ENCODE measurements at regions of chr17 and their contacts with region 1.

Region 1: GRCh38 chr17:37406635-37407461 is at the starts of genes ACACA and TADA2A:
- DNase-seq: peak; percentile 88 to 97 (median 96)
- ATAC-seq: peak; percentile 97
- H3K4me3 ChIP-seq: peak within 1 kb of the TSS; percentile 84
- H3K27ac ChIP-seq: peak within 1 kb of the TSS; percentile 98
- H3K4me1 ChIP-seq: peaks cover 15% of the 10 kb centered on the region in 2 experiments; a peak in 3 of 5 replicates
- H3K27me3 ChIP-seq: no peaks in the 10 kb centered on the region
- CTCF ChIP-seq: no peak
- EP300 ChIP-seq: 0 out of 2 replicates have a peak, but pooled peaks have one; percentile 11
- POLR2A ChIP-seq: peak; percentile 87
- RAD21 ChIP-seq: no peak
- polyA plus RNA-seq, gene ACACA: 35.9 to 42.9 TPM
- polyA plus RNA-seq, gene TADA2A: 28.0 to 33.5 TPM

Region 2: GRCh38 chr17:37465069-37465616 is 58.3 kb after region 1 on chr17:
- CTCF ChIA-PET with region 1: no interaction called
- POLR2A ChIA-PET with region 1: no interaction called
- in situ Hi-C with region 1: no loop called
- intact Hi-C with region 1: no loop called
- DNase-seq: no peak
- ATAC-seq: no peak
- H3K4me3 ChIP-seq: no peak overlapping the region
- H3K27ac ChIP-seq: no peak overlapping the region
- H3K4me1 ChIP-seq: no peaks in the 10 kb centered on the region
- H3K27me3 ChIP-seq: no peaks in the 10 kb centered on the region
- CTCF ChIP-seq: no peak
- EP300 ChIP-seq: no peak
- POLR2A ChIP-seq: no peak
- RAD21 ChIP-seq: no peak

Region 3: DNA sequence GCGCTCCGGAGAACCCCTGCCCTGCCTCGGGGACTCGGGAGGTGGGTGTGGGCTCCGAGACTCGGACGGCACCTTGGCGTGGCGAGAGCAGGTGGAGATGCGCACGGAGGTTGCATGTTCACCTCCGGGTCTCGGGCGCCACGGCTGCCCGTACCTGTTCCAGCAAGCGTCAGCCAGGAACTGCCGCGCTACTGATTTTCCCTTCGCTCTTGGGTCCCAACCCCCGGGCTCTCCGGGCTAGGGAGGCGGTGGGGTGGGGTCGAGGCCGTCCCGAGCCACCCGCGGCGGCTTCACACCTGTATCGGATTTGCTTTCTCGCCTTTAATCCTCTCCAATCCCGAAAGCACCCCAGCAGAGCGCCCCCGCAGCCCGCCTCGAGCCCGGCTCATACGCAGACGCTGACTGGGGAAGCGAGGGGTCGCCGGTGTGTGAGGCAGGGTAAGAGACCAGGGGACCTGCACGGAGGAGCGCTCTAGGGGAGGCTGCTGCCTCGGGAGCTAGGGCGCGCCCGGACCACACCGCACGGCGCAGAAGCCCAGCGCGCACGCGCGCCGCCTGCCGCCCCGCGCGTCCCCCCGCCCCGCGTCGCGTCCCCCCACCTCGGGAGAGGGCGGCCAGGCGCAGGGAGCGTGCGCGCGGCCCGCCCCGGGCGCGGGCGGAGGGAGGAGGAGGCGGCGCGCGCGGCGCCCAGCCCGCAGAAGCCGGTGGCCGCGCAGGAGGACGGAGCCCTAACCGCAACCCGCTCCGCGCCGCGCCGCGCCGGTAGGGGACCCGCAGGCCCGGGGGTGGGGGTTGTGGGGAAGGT is 82.6 kb after region 1 on chr17 and contains the start of gene DUSP14:
- CTCF ChIA-PET with region 1: no interaction called
- POLR2A ChIA-PET with region 1: interaction called, 3 read pairs
- in situ Hi-C with region 1: no loop called
- intact Hi-C with region 1: loop called (anchors 5 kb)
- DNase-seq: peak; percentile 92 to 97 (median 96)
- ATAC-seq: peak; percentile 80
- H3K4me3 ChIP-seq: peak within 1 kb of the TSS; percentile 74
- H3K27ac ChIP-seq: peak within 1 kb of the TSS; percentile 79
- H3K4me1 ChIP-seq: peaks cover 11 to 24% of the 10 kb centered on the region in 2 experiments; a peak in 4 of 5 replicates
- H3K27me3 ChIP-seq: no peaks in the 10 kb centered on the region
- CTCF ChIP-seq: no peak; a peak in 1 of 6 replicates
- EP300 ChIP-seq: no peak
- POLR2A ChIP-seq: peak; percentile 80
- RAD21 ChIP-seq: no peak
- polyA plus RNA-seq, gene DUSP14: 64.0 to 74.0 TPM